Posterior vena cava (tissue), 2 donors: ENCODE measurements at regions of chr11 and their contacts with region 1.

Region 1: DNA sequence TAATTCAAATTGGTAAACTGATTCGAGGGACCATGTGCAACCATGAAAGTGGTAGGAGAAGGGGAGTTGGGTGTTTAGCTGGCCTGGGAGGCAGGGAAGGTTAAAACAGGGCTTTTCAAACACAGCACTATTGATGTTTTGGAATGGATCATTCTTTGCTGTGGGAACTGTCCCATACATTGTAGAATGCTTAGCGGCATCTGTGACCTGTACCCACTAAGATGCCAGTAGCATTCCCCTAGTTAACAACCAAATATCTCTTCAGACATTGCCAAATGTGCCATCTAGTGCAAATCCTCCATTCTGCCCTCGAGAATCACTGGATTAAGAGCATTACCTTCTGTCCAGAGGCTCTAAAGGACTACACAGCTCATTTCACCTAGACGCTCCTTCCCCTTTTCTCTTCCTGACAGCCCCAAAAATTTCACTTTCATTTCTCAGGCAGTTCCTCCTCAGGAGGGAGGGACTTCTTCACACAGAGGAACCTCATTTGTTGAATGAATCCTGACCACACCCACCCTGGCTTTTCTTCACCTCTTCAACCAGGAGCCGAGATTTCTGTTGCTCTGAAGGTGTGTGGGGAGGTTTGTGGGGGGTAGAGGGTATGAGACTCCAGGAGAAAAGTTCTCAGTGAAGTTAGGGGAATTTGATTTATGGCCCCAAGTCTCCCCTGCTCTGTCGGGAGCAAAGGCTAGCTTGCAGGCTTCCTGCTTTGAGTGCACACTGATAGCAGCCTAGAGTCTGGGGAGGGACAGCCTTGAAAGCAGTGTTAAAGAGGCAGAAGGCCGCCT is at the start of gene TRIM34:
- DNase-seq: no peak
- total RNA-seq, gene TRIM34: 4.1 to 4.5 TPM

Region 2: GRCh38 chr11:5684646-5685362 is 60.1 kb after region 1 on chr11 and contains the start of gene TRIM5:
- intact Hi-C with region 1: loop called (anchors 10 kb)
- DNase-seq: peak; percentile 94
- total RNA-seq, gene TRIM5: 18.1 to 20.2 TPM